Posterior cingulate gyrus (tissue), 11 donors: ENCODE measurements at regions of chr3 and their contacts with region 1.

Region 1: DNA sequence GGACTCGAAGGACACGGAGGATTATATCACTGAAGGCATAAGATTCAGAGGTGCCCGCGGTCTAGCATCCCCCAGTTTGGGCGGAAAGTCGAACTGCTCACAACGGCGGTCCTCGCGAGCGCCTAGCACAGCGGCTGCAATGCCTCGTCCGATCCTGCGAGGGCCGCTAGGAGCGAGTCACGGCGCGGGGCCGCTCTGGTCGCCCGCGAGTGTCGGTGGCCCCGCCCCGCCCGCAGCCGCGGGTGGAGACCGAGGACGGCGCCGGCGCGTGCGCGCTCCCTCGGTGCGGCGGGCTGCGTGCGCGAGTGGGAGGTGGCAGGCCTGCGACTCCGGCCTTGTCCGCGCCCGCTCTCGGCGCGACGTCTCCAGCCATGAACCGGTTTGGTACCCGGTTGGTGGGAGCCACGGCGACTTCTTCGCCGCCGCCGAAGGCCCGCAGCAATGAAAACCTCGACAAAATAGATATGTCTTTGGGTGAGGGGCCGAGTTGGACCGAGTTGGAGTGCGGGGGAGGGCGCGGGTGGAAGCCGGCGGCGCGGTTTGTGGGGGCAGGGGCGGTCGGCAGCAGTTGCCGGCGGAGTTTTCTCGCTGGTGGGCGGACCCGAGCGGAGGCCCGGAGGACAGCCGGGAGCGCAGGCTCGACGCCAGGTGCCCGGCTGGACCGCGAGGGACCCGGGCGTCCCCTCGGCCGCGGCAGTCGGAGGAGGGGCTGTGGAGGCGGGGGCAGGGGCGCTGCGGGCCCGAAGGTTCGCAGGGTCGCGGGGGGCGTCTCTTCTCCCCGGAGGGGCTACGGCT is at the start of gene FYTTD1:
- DNase-seq: peak; percentile 85 to 99 (median 94)

Region 2: DNA sequence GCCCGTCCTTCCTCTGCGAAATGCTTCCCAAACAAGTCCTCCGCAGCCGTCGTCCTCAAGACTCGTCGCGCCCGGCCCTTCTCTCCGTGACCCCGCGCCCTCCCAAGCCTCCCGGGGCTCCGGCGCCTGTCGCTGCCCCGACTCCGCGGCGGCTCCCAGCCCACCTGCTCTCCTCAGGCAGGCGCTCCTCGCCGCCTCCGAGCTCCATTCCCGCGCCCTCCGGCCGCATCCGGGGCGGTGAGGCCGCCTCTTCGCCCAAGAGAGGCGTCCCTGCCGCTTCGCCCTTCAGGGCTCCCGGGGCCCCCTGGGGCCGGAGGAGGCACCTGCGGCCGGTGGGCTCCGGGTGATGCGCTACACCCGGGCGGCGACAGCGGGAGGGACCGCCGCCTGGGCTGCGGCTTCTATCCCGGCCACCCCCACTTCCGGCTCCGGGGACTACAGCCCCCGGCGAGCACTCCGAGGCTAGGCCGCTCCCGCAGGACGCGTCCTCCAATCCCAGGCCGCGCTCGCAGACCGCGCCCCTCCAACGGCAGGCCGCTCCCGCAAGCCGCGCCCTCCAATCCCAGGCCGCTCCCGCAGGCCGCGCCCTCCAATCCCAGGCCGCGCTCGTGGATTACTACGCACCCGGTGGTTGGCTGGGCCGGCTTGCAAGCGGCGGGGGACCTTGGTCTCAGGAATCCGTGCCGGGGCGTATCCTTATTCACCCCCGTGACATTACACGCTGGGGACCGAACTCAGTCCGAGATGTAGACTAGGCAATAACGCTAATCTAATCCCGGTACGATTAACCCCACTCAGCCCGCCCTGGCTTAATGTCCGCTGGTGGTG is 13.1 kb before region 1 on chr3 and contains the start of gene RUBCN:
- intact Hi-C with region 1: loop called (anchors 1 kb)
- DNase-seq: peak; percentile 93 to 99 (median 96)

Region 3: GRCh38 chr3:197820550-197821335 is 70.9 kb after region 1 on chr3:
- intact Hi-C with region 1: no loop called
- DNase-seq: no peak